SK-N-SH (cell line): ENCODE measurements at regions of chr2 and their contacts with region 1.

Region 1: DNA sequence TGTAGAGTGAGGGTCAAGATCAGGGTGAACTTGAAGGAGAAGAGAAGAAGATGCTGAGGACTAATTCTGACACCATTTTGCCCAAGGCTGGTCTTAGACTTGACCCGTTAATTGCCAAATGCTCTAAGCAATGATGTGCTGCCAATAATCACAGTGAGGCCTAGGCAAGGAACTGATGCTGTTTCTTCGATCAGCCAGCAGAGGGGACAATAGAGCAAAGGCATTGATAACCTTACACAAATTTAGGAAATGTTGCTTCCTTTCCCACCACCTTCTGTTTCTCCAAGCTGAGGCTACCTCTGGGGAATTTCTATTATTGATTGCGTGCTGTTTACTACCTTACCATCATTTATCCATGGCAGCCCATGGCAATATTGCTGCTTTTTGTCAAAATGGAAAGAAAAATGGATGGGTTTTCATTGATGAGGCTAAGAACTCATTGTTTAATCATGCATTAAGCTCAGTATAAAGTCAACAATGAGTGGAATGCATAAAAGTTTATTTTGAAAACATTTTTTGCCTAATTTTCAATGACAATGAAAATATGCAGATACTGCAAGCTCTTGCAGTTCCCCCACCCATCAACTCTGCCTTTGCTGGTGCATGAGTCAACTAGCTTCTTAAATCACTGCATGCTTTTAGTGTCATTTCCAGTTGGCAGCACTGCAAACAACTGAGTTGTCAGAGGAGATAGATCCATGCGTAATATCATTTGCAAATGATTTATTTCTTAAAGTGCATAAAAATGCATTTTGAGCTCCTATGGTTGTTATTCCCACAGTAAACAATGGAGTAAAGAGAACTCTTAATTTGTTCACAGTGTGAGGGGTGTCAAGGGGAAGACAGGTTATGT is 116.4 kb upstream of the NYAP2 start:
- DNase-seq: peak; percentile 33
- H3K4me3 ChIP-seq: no peak overlapping the region; a peak in 1 of 4 replicates
- H3K27ac ChIP-seq: no peak overlapping the region
- H3K4me1 ChIP-seq: no peaks in the 10 kb centered on the region
- H3K27me3 ChIP-seq: no peaks in the 10 kb centered on the region
- CTCF ChIP-seq: peak; percentile 68
- EP300 ChIP-seq: no peak
- RAD21 ChIP-seq: peak; percentile 80

Region 2: DNA sequence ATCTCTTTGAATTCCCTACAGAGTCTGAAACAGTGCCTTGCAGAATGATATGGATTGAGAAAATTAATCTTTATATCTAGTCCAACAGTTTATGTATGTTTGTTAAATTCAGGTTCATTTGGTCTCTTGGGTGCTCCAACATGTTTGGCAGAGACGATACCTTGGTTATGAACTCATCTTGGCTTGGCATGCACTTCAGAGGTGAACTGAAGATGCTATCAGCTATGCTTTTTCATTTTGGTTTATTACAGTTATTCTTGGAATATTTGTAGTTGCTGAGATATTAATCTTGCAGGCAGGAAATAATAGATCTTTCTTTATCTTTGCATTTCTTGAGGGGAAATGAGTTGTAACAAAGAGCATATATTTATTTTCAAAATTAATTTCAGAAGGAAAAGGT is 41.9 kb before region 1 on chr2:
- CTCF ChIA-PET with region 1: no interaction called
- POLR2A ChIA-PET with region 1: no interaction called
- DNase-seq: no peak
- H3K4me3 ChIP-seq: no peak overlapping the region
- H3K27ac ChIP-seq: no peak overlapping the region
- H3K4me1 ChIP-seq: no peaks in the 10 kb centered on the region
- H3K27me3 ChIP-seq: no peaks in the 10 kb centered on the region
- CTCF ChIP-seq: no peak
- EP300 ChIP-seq: no peak
- RAD21 ChIP-seq: no peak

Region 3: GRCh38 chr2:225337183-225337582 is 54.1 kb after region 1 on chr2:
- CTCF ChIA-PET with region 1: no interaction called
- POLR2A ChIA-PET with region 1: no interaction called
- DNase-seq: no peak
- H3K4me3 ChIP-seq: no peak overlapping the region
- H3K27ac ChIP-seq: no peak overlapping the region
- H3K4me1 ChIP-seq: peaks cover 0 to 3% of the 10 kb centered on the region in 2 experiments; a peak in 2 of 4 replicates
- H3K27me3 ChIP-seq: no peaks in the 10 kb centered on the region
- CTCF ChIP-seq: no peak
- EP300 ChIP-seq: no peak
- RAD21 ChIP-seq: no peak

Region 4: GRCh38 chr2:225512878-225513580 is 229.9 kb after region 1 on chr2:
- CTCF ChIA-PET with region 1: no interaction called
- POLR2A ChIA-PET with region 1: no interaction called
- DNase-seq: no peak
- H3K4me3 ChIP-seq: no peak overlapping the region
- H3K27ac ChIP-seq: no peak overlapping the region
- H3K4me1 ChIP-seq: no peaks in the 10 kb centered on the region
- H3K27me3 ChIP-seq: no peaks in the 10 kb centered on the region
- CTCF ChIP-seq: no peak
- EP300 ChIP-seq: no peak
- RAD21 ChIP-seq: no peak

Region 5: GRCh38 chr2:225566798-225567197 is 283.7 kb after region 1 on chr2:
- CTCF ChIA-PET with region 1: no interaction called
- POLR2A ChIA-PET with region 1: no interaction called
- DNase-seq: no peak
- H3K4me3 ChIP-seq: no peak overlapping the region
- H3K27ac ChIP-seq: no peak overlapping the region
- H3K4me1 ChIP-seq: no peaks in the 10 kb centered on the region
- H3K27me3 ChIP-seq: no peaks in the 10 kb centered on the region
- CTCF ChIP-seq: no peak
- EP300 ChIP-seq: no peak
- RAD21 ChIP-seq: no peak

Region 6: DNA sequence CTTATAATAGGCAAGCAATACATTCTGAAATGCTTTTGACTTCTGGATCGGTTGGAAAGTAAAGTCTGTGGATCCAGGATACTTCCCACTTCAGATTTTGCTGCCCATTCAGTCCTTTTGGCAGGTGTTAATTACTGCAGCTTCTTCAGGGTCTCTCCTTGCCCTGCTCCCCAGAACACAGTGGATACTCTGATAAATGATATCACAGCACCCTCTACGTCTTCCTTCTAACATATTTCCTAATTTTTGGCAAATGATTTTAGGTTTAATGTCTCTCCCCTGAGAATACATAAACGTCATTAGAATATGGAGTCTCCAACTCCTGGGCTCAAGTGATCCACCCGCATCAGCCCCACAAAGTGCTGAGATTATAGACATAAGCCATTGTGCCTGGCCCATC is 366.2 kb after region 1 on chr2:
- CTCF ChIA-PET with region 1: interaction called, 18 read pairs
- POLR2A ChIA-PET with region 1: no interaction called
- DNase-seq: no peak
- H3K4me3 ChIP-seq: no peak overlapping the region
- H3K27ac ChIP-seq: no peak overlapping the region
- H3K4me1 ChIP-seq: no peaks in the 10 kb centered on the region; a peak in 1 of 4 replicates
- H3K27me3 ChIP-seq: no peaks in the 10 kb centered on the region
- CTCF ChIP-seq: no peak
- EP300 ChIP-seq: no peak
- RAD21 ChIP-seq: peak; percentile 51